Activated B cell treated with CpG ODN at 0.5 μM for 24 hours (primary cell): ENCODE measurements at regions of chr2 and their contacts with region 1.

Region 1: GRCh38 chr2:238320246-238320647 is at the start of gene TRAF3IP1:
- DNase-seq: peak; percentile 88
- ATAC-seq: peak; percentile 98
- H3K4me3 Mint-ChIP-seq: peak within 1 kb of the TSS; percentile 82
- H3K27ac Mint-ChIP-seq: no peak within 1 kb of the TSS
- H3K4me1 Mint-ChIP-seq: peaks cover 13% of the 10 kb centered on the region
- H3K27me3 Mint-ChIP-seq: peaks cover 9% of the 10 kb centered on the region
- CTCF ChIP-seq: no peak
- total RNA-seq, gene TRAF3IP1: 9.5 and 9.9 TPM in 2 replicates

Region 2: DNA sequence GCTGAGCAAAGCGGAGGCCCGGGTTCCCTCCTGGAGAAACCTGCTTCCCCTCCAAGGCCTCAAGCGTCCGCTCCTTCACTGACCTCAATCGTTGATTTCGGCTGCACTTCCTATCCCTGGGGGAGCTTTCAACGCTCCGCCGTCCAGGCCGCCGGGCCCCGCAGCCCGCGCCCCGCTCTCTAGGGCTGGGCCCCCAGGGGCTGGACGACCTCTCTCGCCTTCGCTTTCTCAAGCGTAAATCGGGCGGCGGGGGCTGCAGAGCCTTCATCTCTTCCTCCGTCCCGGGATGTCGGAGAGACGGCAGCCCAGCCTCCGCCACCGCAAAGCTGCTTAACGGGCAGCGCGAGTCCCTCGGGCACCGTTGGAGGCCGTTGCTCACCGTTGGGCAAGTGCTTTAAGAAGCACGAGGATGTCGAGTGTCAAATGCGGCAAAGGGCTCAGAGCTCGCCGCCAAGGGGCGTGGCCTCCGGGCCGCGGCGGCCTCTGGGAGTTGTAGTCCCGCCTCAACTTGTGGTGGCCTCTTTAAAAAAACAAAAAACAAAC is 88.9 kb before region 1 on chr2:
- CTCF ChIA-PET with region 1: no interaction called
- POLR2A ChIA-PET with region 1: no interaction called
- intact Hi-C with region 1: loop called (anchors 2 kb)
- DNase-seq: peak; percentile 76
- ATAC-seq: peak; percentile 84
- H3K4me3 Mint-ChIP-seq: peak overlapping the region; percentile 90
- H3K27ac Mint-ChIP-seq: no peak overlapping the region
- H3K4me1 Mint-ChIP-seq: peaks cover 16% of the 10 kb centered on the region
- H3K27me3 Mint-ChIP-seq: peaks cover 17% of the 10 kb centered on the region
- CTCF ChIP-seq: no peak

Region 3: GRCh38 chr2:238389926-238390597 is 69.8 kb after region 1 on chr2:
- CTCF ChIA-PET with region 1: no interaction called
- POLR2A ChIA-PET with region 1: no interaction called
- intact Hi-C with region 1: no loop called
- DNase-seq: no peak
- ATAC-seq: no peak
- H3K4me3 Mint-ChIP-seq: no peak overlapping the region
- H3K27ac Mint-ChIP-seq: no peak overlapping the region
- H3K4me1 Mint-ChIP-seq: no peaks in the 10 kb centered on the region
- H3K27me3 Mint-ChIP-seq: no peaks in the 10 kb centered on the region
- CTCF ChIP-seq: no peak

Region 4: DNA sequence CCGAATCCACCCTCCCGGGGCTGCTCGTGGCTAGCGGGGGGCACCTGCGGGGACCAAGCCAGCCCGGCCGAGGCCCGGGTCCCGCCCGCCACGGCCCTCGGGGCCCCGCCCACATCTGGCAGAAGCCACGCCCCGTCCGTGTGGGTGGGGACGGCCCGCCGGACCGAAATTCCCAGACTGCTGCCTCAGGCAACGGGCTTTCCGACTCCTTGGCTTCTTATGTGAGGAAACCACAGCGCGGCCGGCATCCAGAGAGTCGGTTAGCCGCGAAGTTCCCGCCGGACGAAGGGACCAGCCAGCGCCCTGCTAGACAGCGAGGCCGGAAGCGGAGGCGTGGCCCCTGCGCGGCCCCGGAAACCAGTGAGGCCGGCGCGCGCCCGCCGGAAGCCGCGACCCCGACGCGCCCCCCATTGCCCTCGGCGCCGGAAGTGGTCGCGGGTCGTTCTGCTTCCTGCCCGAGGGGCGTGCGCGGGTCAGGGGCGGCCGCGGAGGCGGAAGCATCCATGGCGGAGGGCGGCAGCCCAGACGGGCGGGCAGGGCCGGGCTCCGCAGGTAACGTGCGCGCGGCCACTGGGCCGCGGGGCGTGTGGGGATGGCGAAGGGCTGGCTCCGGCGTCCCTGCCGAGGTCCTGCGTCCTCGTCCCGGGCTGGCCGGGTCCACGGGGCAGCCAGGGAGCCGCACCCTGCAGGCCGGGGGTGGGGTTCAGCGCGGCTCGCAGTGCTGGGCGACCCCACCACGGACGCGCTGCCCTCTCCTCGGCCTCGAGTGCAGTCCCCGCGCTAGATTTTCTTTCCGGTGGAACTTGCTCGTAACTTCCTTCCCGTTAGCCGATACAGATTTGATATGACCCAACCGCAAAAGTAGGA is 106.6 kb after region 1 on chr2 and contains the start of gene ASB1:
- CTCF ChIA-PET with region 1: no interaction called
- POLR2A ChIA-PET with region 1: no interaction called
- intact Hi-C with region 1: loop called (anchors 1 kb)
- DNase-seq: peak; percentile 84
- ATAC-seq: peak; percentile 86
- H3K4me3 Mint-ChIP-seq: peak within 1 kb of the TSS; percentile 92
- H3K27ac Mint-ChIP-seq: peak within 1 kb of the TSS; percentile 94
- H3K4me1 Mint-ChIP-seq: peaks cover 39% of the 10 kb centered on the region
- H3K27me3 Mint-ChIP-seq: no peaks in the 10 kb centered on the region
- CTCF ChIP-seq: no peak
- total RNA-seq, gene ASB1: 44.5 and 49.8 TPM in 2 replicates